Mammary epithelial cell (primary cell): ENCODE measurements at regions of chr3 and their contacts with region 1.

Region 1: GRCh38 chr3:42118762-42119361 is 27.7 kb downstream of the TRAK1 start:
- DNase-seq: peak; percentile 66
- H3K4me3 ChIP-seq: no peak overlapping the region
- H3K27ac ChIP-seq: peak overlapping the region; percentile 30
- H3K4me1 ChIP-seq: peaks cover 73% of the 10 kb centered on the region
- H3K27me3 ChIP-seq: no peaks in the 10 kb centered on the region
- CTCF ChIP-seq: peak; percentile 43 to 62

Region 2: GRCh38 chr3:41768363-41768762 is 350.5 kb before region 1 on chr3:
- CTCF ChIA-PET with region 1: no interaction called
- dilution Hi-C with region 1: no loop called
- in situ Hi-C with region 1: no loop called
- intact Hi-C with region 1: no loop called
- DNase-seq: peak; percentile 77
- H3K4me3 ChIP-seq: no peak overlapping the region
- H3K27ac ChIP-seq: no peak overlapping the region
- H3K4me1 ChIP-seq: peaks cover 8% of the 10 kb centered on the region
- H3K27me3 ChIP-seq: no peaks in the 10 kb centered on the region
- CTCF ChIP-seq: no peak

Region 3: GRCh38 chr3:41893977-41894376 is 224.9 kb before region 1 on chr3:
- CTCF ChIA-PET with region 1: interaction called, 3 read pairs
- dilution Hi-C with region 1: no loop called
- in situ Hi-C with region 1: no loop called
- intact Hi-C with region 1: loop called (anchors 5 kb)
- DNase-seq: peak; percentile 36
- H3K4me3 ChIP-seq: no peak overlapping the region
- H3K27ac ChIP-seq: no peak overlapping the region
- H3K4me1 ChIP-seq: no peaks in the 10 kb centered on the region
- H3K27me3 ChIP-seq: no peaks in the 10 kb centered on the region
- CTCF ChIP-seq: peak; percentile 29 to 54

Region 4: DNA sequence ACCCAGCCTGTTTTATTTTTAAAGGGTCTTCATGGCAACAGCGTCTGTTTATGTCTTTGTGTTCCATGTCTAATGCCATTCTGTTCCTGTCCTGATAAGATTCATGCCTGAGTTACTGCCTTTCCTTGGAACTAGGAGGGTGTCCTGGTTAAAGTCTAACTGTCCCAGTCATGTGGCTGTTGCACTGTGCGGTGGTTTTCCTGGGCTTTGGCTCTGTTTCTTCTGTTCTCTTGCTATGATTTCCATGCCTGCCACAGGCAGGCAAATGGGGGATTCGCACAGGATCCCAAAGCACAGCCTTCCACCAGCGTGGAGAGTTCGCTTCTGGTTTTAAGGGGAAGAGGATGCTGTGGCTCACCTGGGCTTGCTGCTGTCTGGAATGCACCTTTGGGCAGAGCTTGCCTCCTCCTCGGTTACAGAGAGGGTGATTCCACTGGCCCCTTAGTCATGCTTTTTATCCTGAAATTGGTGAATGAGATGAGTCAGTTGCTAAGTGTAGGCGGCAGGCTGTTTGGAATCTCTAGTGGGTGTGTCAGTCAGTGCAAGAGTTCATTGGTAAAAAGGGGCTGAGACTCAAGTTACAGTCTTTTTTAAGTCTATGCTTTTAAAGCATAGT is 60.4 kb after region 1 on chr3:
- CTCF ChIA-PET with region 1: interaction called, 11 read pairs
- dilution Hi-C with region 1: no loop called
- in situ Hi-C with region 1: loop called in 1 of 2 experiments (anchors 10 kb)
- intact Hi-C with region 1: no loop called
- DNase-seq: peak; percentile 97
- H3K4me3 ChIP-seq: no peak overlapping the region
- H3K27ac ChIP-seq: peak overlapping the region; percentile 89
- H3K4me1 ChIP-seq: peaks cover 52% of the 10 kb centered on the region
- H3K27me3 ChIP-seq: no peaks in the 10 kb centered on the region
- CTCF ChIP-seq: no peak

Region 5: DNA sequence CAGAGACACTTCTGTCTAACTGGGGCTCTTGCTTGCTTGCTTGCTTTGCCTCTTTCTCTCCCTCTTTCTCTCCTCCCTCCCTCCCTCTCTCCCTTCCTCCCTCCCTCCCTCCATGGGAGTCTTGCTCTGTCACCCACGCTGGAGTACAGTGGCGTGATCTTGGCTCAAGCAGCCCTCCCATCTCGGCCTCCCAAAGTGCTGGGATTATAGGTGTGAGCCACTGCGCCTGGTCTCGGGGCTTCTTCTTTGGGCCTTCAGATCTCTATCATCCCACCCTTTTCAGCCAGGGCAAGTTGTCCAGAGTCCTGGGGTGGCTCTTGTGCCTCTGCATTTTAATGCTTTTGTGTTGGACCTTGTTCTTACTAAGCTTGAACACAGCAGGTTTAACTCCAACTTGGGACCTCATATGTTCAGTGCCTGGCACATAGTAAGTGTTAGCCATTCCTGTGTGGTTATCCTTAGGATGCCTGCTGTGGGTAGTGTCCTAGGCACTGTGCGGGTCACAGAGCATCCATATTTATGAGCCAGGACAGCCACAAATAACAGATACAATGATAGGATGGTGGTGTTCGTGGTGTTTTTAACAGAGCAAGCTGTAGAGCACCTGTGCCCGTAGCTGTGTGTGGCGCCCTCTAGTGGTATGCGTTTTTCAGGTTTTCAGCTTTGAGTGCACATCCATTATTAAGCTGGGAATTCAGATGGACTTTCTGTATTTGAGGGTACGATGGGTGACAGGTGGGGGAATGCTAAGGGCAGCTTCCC is 72.0 kb after region 1 on chr3:
- CTCF ChIA-PET with region 1: interaction called, 29 read pairs
- dilution Hi-C with region 1: no loop called
- in situ Hi-C with region 1: loop called (anchors 5 to 10 kb)
- intact Hi-C with region 1: loop called (anchors 1 kb)
- DNase-seq: peak; percentile 51
- H3K4me3 ChIP-seq: no peak overlapping the region
- H3K27ac ChIP-seq: no peak overlapping the region
- H3K4me1 ChIP-seq: peaks cover 7% of the 10 kb centered on the region
- H3K27me3 ChIP-seq: no peaks in the 10 kb centered on the region
- CTCF ChIP-seq: peak; percentile 90 to 93

Region 6: DNA sequence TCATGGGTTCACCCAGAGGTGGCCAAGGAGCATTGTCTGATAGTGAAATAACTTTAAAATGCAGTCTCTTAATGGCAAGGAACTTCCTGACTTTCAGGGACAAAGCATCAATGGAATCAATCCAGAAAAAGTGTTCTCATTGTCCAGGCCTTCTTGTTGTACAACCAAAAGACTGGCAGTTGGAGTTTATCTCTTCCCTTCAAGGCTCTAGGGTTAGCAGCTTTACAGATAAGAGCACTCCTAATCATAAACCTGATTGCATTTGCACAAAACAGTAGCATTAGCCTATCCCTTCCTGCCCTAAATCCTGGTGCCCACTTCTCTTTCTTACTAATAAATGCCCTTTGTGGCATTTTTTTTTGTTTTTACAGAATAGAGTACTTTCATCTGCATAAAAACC is 340.3 kb after region 1 on chr3:
- CTCF ChIA-PET with region 1: no interaction called
- dilution Hi-C with region 1: no loop called
- in situ Hi-C with region 1: no loop called
- intact Hi-C with region 1: no loop called
- DNase-seq: no peak
- H3K4me3 ChIP-seq: no peak overlapping the region
- H3K27ac ChIP-seq: no peak overlapping the region
- H3K4me1 ChIP-seq: no peaks in the 10 kb centered on the region
- H3K27me3 ChIP-seq: no peaks in the 10 kb centered on the region
- CTCF ChIP-seq: no peak

Region 7: GRCh38 chr3:42547401-42547945 is 428.6 kb after region 1 on chr3:
- CTCF ChIA-PET with region 1: no interaction called
- dilution Hi-C with region 1: no loop called
- in situ Hi-C with region 1: no loop called
- intact Hi-C with region 1: loop called (anchors 10 kb)
- DNase-seq: peak; percentile 36
- H3K4me3 ChIP-seq: no peak overlapping the region
- H3K27ac ChIP-seq: no peak overlapping the region
- H3K4me1 ChIP-seq: no peaks in the 10 kb centered on the region
- H3K27me3 ChIP-seq: no peaks in the 10 kb centered on the region
- CTCF ChIP-seq: peak; percentile 94 to 98